ENCODE measurements at regions of chr3 and their contacts with region 1.

Region 1: GRCh38 chr3:142578327-142579223 is at the start of gene ATR:
- DNase-seq: peak; percentile 98

Region 2: DNA sequence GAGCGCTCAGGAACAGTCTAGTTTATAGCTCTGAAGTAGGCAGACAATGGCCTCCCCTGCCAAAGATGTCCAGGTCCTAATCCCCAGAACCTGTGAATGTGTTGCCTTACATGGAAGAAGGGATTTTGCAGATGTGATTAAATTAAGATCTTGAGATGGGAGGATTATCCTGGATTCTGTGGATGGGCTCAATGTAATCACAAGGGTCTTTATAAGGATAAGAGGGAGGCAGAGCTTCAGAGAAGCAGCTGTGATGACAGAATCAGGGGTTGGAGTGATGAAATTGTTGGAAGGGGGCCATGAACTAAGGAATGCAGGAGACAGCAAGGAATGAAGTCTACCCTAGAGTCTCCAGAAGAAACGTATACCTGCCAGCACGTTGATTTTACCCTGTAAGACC is 339.2 kb before region 1 on chr3:
- in situ Hi-C with region 1: no loop called
- DNase-seq: no peak

Region 3: GRCh38 chr3:142904639-142905436 is 326.3 kb after region 1 on chr3:
- in situ Hi-C with region 1: loop called (anchors 25 kb)
- DNase-seq: peak; percentile 70

Region 4: GRCh38 chr3:142993958-142994442 is 415.4 kb after region 1 on chr3:
- in situ Hi-C with region 1: loop called (anchors 25 kb)
- DNase-seq: peak; percentile 78